Sigmoid colon (tissue), 7 donors: ENCODE measurements at regions of chr15 and their contacts with region 1.

Region 1: DNA sequence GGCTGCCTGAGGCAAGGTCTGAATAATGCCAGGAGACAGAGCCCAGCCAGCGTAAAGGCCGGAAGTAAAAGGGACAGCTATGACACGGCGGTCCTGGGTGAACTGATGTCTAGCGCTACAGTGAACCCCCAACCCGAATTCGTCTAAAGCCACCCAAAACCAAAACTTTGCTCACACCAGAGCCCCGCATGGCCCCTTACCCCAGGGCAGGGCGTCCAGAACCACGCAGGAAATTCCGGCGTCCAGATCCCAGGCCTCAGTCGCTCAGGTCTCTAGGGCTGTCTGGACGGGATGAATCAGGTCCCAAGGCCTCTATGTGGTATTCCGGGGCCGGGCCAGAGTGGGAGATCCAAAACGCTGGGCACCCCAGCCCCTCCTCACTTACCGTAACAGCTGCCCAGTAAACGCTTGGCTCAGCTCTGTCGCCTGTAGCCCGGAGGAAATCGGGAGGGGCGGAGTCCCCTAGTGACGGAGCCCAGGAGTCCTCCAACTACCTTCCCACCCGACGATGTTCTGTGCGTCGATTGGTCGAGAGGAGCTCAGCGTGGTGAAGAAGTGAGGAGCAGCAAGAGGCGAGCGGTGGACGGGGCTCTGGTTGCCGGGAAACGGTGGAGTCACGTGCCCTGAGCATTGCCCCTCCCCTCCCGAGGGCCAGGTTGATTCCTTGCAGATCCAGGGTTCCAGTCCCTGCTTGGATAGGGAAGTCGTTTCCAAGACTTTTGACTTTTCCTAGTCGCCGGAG is at the start of gene CCDC32:
- DNase-seq: peak; percentile 99
- H3K4me3 ChIP-seq: peak within 1 kb of the TSS; percentile 63 to 90 (median 86)
- H3K27ac ChIP-seq: peak within 1 kb of the TSS; percentile 86 to 97 (median 96)
- H3K4me1 ChIP-seq: peaks cover 0 to 33% (median 23%) of the 10 kb centered on the region in 4 donors
- H3K27me3 ChIP-seq: no peaks in the 10 kb centered on the region
- CTCF ChIP-seq: no peak
- EP300 ChIP-seq: no peak
- POLR2A ChIP-seq: peak; percentile 62 to 73
- total RNA-seq, gene CCDC32: 21.4 to 55.3 (median 40.5) TPM

Region 2: DNA sequence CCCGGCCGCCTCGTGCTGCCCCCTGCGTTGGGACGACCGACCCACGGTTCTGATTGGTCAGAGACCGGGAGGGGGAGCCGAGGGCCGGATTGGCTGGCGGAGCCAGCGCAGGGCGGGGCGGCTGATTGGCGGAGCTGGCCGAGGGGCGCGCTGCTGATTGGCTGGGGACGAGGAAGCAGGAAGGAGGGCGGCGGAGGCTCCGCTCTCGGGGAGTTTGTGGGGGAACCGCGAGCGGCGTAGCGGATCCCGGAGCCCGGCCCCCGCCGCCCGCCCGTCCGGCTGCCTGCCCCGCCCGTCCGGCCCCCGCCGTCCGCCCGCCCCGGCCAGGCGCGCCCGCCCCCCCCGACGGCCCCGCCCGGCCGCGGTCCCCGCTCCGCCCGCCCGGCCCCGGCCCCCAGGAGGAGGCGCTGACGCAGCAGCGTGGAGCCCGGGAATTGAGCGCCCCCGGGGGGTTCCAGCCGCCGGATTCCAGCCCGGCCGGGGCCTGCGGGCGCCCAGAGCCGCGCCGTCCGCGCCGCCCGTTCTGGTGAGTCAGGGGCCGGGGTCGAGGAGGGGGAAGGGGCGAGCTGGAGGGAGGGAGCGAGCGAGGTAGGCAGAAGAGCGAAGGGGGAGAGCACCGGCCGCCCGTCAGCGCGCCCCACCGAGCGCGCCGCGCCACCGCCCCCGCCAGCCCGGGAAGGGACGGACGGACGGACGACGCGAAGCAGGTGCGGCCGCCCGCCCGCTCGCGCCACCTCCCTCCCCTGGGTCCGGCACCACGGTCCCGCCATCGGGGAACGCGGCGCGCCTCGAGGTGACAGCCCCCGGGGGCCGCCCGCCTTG is 123.8 kb before region 1 on chr15 and contains the start of gene BAHD1:
- intact Hi-C with region 1: loop called (anchors 5 kb)
- DNase-seq: peak; percentile 98
- H3K4me3 ChIP-seq: peak within 1 kb of the TSS; percentile 89 to 98 (median 92)
- H3K27ac ChIP-seq: peak within 1 kb of the TSS; percentile 79 to 85 (median 82)
- H3K4me1 ChIP-seq: peaks cover 0 to 65% (median 57%) of the 10 kb centered on the region in 4 donors
- H3K27me3 ChIP-seq: peaks cover 15 to 25% (median 19%) of the 10 kb centered on the region in 3 donors
- CTCF ChIP-seq: no peak
- EP300 ChIP-seq: no peak
- POLR2A ChIP-seq: no peak
- total RNA-seq, gene BAHD1: 7.7 to 16.3 (median 9.3) TPM

Region 3: DNA sequence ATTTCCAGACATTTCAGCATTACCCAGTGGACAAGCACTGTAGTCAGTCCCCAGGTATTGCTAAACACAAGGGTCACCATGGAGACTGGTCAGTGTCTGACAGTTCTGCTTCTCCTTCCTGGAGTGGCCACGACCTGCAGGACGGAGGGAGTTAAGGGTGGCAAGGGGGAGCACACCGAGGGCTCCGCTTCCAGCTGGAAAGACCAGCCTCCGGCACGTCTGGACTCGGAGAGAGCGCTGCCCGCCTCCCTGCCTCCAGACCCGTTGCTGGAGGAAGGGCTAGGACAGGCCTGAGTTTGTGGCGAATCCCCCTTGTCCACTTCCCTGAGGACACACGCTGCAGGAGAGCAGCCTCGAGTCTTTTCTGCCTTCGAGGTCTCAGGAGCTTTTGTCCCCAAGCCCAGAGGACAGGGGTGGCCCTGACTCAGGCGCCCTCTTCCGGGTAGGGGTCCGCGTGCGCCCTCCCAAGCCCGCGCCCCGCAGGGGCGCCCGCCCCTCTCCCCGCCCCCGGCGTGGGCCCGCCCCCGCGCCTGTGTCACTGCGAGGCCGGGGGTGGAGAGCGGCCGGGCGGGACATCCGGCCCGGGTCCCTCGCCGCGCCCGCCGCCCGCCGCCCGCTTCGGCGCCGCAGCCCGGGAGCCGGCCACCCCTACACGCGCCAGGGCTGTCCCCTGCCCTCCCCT is 94.2 kb before region 1 on chr15 and contains the start of gene CHST14:
- intact Hi-C with region 1: loop called (anchors 5 kb)
- DNase-seq: peak; percentile 75
- H3K4me3 ChIP-seq: peak within 1 kb of the TSS; percentile 61 to 92 (median 82)
- H3K27ac ChIP-seq: peak within 1 kb of the TSS; percentile 84 to 89 (median 88)
- H3K4me1 ChIP-seq: peaks cover 0 to 22% (median 18%) of the 10 kb centered on the region in 4 donors
- H3K27me3 ChIP-seq: no peaks in the 10 kb centered on the region
- CTCF ChIP-seq: no peak
- EP300 ChIP-seq: no peak
- POLR2A ChIP-seq: no peak
- total RNA-seq, gene CHST14: 6.4 to 10.2 (median 7.4) TPM

Region 4: DNA sequence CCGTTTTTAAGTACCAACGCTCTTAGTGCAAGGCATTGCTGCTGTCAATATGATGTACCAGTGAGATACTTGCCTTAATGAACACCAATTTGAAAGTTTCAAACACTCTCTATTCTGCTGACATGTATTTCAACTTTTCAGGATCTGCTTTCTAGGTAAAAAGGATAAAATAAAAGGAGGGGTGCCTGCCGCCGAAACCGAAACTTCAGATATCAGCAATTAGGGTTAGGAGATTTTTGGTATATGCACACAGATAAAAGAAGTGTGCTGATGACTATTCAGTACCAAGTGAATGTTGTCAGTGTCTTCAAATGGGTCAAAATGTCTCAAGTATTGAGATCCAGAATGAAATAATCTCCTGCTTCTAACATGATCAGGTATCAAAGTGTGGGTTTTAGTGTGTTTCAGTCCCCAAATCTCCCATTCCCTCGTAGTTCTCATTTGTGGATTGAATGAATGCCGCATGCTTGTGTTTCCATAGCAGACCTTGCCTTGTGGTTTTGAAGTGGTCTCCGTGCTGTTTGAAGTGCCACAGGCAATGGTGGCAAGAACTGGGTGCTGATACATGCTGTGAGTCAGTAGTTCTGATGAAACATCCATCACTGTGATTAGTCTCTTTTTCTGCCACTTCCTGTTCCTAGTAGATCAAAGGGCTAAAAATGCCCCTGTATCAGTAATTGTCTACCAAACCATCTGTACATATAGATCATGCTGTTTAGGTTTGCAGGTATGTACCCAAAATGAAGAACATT is 71.5 kb before region 1 on chr15:
- intact Hi-C with region 1: no loop called
- DNase-seq: no peak
- H3K4me3 ChIP-seq: no peak overlapping the region
- H3K27ac ChIP-seq: no peak overlapping the region
- H3K4me1 ChIP-seq: no peaks in the 10 kb centered on the region
- H3K27me3 ChIP-seq: no peaks in the 10 kb centered on the region
- CTCF ChIP-seq: no peak
- EP300 ChIP-seq: no peak
- POLR2A ChIP-seq: no peak

Region 5: GRCh38 chr15:40593588-40594428 is 29.0 kb after region 1 on chr15 and contains the start of gene KNL1:
- intact Hi-C with region 1: loop called (anchors 2 kb)
- DNase-seq: peak; percentile 95
- H3K4me3 ChIP-seq: peak within 1 kb of the TSS; percentile 40 to 60 (median 57)
- H3K27ac ChIP-seq: peak within 1 kb of the TSS; percentile 83 to 88 (median 86)
- H3K4me1 ChIP-seq: peaks cover 0 to 12% (median 9%) of the 10 kb centered on the region in 4 donors
- H3K27me3 ChIP-seq: peaks cover 0 to 29% (median 6%) of the 10 kb centered on the region in 3 donors
- CTCF ChIP-seq: no peak
- EP300 ChIP-seq: no peak
- POLR2A ChIP-seq: no peak
- total RNA-seq, gene KNL1: 0.36 to 0.83 (median 0.68) TPM in 3 of 4 donors, not detected in the other

Region 6: GRCh38 chr15:40754883-40755811 is 190.4 kb after region 1 on chr15 and contains the start of gene RMDN3:
- intact Hi-C with region 1: loop called (anchors 10 kb)
- DNase-seq: peak; percentile 96
- H3K4me3 ChIP-seq: peak within 1 kb of the TSS; percentile 69 to 95 (median 85)
- H3K27ac ChIP-seq: peak within 1 kb of the TSS; percentile 76 to 84 (median 80)
- H3K4me1 ChIP-seq: peaks cover 0 to 35% (median 25%) of the 10 kb centered on the region in 4 donors
- H3K27me3 ChIP-seq: no peaks in the 10 kb centered on the region
- CTCF ChIP-seq: no peak
- EP300 ChIP-seq: no peak
- POLR2A ChIP-seq: no peak
- total RNA-seq, gene RMDN3: 20.8 to 26.4 (median 22.4) TPM